CD14-positive monocyte (primary cell): ENCODE measurements at regions of chr6 and their contacts with region 1.

Region 1: DNA sequence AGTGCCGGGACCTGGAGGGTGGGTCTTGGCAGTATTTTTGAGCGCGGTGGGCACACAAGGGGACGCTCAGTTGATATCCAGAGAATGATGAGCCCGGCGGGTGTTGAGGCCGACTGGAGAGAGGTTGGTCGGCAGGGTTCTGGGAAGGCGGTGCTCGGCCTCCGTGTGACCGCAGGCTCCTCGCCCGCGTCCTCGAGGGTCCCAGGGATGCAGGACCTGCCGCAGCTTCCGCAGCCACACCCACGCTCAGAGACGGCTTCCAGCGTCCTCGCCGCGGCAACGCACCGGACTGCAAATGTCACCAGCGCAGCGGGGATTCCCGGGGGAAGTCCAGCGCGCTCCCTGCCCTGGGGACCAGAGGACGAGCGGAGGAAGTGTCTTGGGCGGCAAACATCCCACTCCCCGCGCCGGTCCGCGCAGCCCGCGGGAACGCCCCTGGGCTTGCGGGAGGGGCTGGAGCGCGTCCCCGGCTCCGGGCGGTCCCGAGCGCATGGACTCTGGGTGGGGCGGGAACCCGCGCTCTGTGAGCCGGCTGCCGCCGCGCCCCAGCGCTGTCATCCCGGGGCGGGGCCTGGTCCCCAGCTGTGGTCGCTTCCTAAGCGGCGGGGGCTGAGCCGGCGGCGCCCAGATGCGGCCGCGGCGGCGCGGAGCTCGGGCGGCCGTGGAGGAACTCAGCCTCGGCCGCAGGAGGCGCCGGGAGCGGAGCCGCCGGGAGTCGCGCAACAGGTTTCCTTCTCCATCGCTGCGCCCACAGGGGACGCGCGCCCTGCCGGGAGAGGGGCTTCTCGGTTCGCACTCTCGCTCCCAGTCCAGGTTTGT is at the start of gene STX11:
- DNase-seq: peak; percentile 91 to 99 (median 95)
- H3K4me3 ChIP-seq: peak within 1 kb of the TSS; percentile 88 to 99 (median 90)
- H3K4me3 Mint-ChIP-seq: peak within 1 kb of the TSS; percentile 95 to 97
- H3K27ac ChIP-seq: peak within 1 kb of the TSS; percentile 96 to 99
- H3K27ac Mint-ChIP-seq: peak within 1 kb of the TSS; percentile 99 to 100 (median 99)
- H3K4me1 ChIP-seq: peaks cover 43 to 44% of the 10 kb centered on the region in 2 donors
- H3K4me1 Mint-ChIP-seq: peaks cover 47% of the 10 kb centered on the region
- H3K27me3 ChIP-seq: no peaks in the 10 kb centered on the region
- H3K27me3 Mint-ChIP-seq: peaks cover 0 to 3% (median 1%) of the 10 kb centered on the region in 3 donors
- CTCF ChIP-seq: no peak
- polyA plus RNA-seq, gene STX11: 276 to 372 (median 367) TPM

Region 2: DNA sequence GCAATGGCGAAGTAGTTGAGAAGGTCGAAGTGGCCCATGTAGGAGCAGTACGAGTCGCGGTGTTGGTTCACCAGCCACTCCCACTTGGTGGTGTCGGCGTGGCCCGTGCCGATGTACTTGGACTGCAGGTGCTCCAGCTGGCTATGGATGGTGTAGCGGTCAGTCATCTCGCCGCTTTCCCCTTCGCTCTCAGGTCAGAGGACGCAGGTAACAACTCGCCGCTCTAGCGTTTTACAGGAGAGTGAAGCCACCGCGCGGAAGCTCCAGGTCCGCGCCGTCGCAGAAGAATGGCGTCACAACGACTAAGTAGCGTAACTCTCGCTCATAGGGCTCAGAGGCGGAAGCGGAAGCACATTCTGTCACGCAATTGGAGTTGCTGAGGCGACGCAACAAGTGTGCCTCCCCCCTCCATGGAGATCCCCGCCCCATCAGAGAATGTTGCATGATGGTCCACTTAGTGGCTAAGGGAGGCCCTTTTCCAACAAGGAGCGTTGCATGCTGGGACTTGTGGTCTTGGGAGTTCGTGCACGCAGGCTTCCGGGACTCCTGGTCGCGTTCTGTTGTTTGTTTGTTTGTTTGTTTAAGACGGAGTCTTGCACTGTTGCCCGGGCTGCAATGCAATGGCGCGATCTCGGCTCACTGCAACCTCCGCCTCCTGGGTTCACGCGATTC is 54.6 kb before region 1 on chr6 and contains the start of gene SF3B5:
- intact Hi-C with region 1: loop called (anchors 5 to 10 kb)
- DNase-seq: peak; percentile 100
- H3K4me3 ChIP-seq: peak within 1 kb of the TSS; percentile 73 to 84 (median 82)
- H3K4me3 Mint-ChIP-seq: peak within 1 kb of the TSS; percentile 95 to 97
- H3K27ac ChIP-seq: peak within 1 kb of the TSS; percentile 87 to 94
- H3K27ac Mint-ChIP-seq: peak within 1 kb of the TSS; percentile 96 to 99 (median 97)
- H3K4me1 ChIP-seq: peaks cover 17 to 24% of the 10 kb centered on the region in 2 donors
- H3K4me1 Mint-ChIP-seq: peaks cover 21% of the 10 kb centered on the region
- H3K27me3 ChIP-seq: no peaks in the 10 kb centered on the region
- H3K27me3 Mint-ChIP-seq: peaks cover 0 to 2% (median 2%) of the 10 kb centered on the region in 3 donors
- CTCF ChIP-seq: no peak
- polyA plus RNA-seq, gene SF3B5: 271 to 445 (median 355) TPM

Region 3: DNA sequence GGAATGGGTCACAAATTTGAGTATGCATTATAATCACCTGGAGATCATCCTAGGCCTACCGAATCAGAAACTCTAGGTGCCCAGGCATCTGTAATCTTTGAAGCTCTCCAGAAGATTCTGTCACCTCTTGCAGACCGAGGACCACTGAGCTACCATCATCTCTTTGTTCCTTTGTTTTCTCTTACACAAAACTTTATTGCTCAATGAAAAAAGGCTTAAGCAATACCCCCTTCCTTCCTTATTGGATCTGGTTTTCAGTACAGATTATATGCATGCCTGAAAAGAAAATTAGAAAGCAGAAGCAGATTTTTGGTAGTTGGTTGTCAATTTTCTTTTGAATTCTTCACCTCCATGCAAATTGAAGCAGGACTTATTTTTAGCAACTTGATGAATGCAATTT is 31.5 kb after region 1 on chr6:
- intact Hi-C with region 1: loop called (anchors 5 kb)
- DNase-seq: peak; percentile 64 to 88 (median 81)
- H3K4me3 ChIP-seq: peak overlapping the region in 1 of 3 experiments; percentile 49
- H3K4me3 Mint-ChIP-seq: no peak overlapping the region
- H3K27ac ChIP-seq: peak overlapping the region; percentile 32 to 53
- H3K27ac Mint-ChIP-seq: peak overlapping the region in 6 of 7 donors; percentile 86 to 95 (median 90)
- H3K4me1 ChIP-seq: peaks cover 66 to 90% of the 10 kb centered on the region in 2 donors
- H3K4me1 Mint-ChIP-seq: peaks cover 87% of the 10 kb centered on the region
- H3K27me3 ChIP-seq: no peaks in the 10 kb centered on the region
- H3K27me3 Mint-ChIP-seq: no peaks in the 10 kb centered on the region
- CTCF ChIP-seq: no peak

Region 4: GRCh38 chr6:144349690-144350527 is 199.8 kb after region 1 on chr6:
- intact Hi-C with region 1: loop called in 1 of 2 experiments (anchors 10 kb)
- DNase-seq: peak in 2 of 3 donors; percentile 55 to 66
- H3K4me3 ChIP-seq: peak overlapping the region; percentile 29 to 71 (median 59)
- H3K4me3 Mint-ChIP-seq: peak overlapping the region; percentile 56 to 82
- H3K27ac ChIP-seq: peak overlapping the region; percentile 83 to 90
- H3K27ac Mint-ChIP-seq: peak overlapping the region; percentile 83 to 96 (median 90)
- H3K4me1 ChIP-seq: peaks cover 89 to 93% of the 10 kb centered on the region in 2 donors
- H3K4me1 Mint-ChIP-seq: peaks cover 90% of the 10 kb centered on the region
- H3K27me3 ChIP-seq: no peaks in the 10 kb centered on the region
- H3K27me3 Mint-ChIP-seq: peaks cover 0 to 5% (median 0%) of the 10 kb centered on the region in 3 donors
- CTCF ChIP-seq: no peak